Psoas muscle (tissue), 8 donors: ENCODE measurements at regions of chr3 and their contacts with region 1.

Region 1: GRCh38 chr3:127172781-127173515 is 20.0 kb upstream of the PRR23E start:
- DNase-seq: no peak
- ATAC-seq: no peak
- H3K4me3 ChIP-seq: no peak overlapping the region
- H3K27ac ChIP-seq: no peak overlapping the region
- H3K4me1 ChIP-seq: peaks cover 12% of the 10 kb centered on the region
- H3K27me3 ChIP-seq: no peaks in the 10 kb centered on the region
- CTCF ChIP-seq: no peak

Region 2: DNA sequence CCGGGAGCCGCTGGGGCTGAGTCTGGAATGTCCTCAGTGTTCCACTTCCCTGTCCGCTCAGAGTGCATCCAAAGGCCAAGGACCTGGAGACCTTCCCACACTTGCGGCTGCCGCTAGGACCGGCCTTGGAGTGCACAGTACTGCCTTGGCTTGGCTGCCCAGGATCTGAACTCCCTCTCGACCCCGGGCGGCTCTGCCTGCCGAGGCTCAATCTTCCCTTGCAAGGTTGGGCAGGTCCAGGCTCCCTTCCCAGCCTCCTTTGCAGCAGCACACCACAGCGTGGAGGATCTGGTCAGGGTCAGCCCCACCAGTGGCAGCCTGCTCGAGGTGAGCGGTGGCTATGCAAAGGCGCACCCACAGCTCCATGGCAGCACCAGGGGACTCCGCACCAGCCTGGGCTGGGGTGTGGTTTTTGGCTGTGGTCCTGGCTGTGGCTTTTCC is 120.8 kb before region 1 on chr3:
- intact Hi-C with region 1: loop called in 1 of 2 experiments (anchors 10 kb)
- DNase-seq: peak; percentile 86 to 92
- ATAC-seq: peak; percentile 84 to 92 (median 89)
- H3K4me3 ChIP-seq: no peak overlapping the region
- H3K27ac ChIP-seq: no peak overlapping the region
- H3K4me1 ChIP-seq: no peaks in the 10 kb centered on the region
- H3K27me3 ChIP-seq: no peaks in the 10 kb centered on the region
- CTCF ChIP-seq: no peak

Region 3: GRCh38 chr3:127135241-127136023 is 37.5 kb before region 1 on chr3:
- intact Hi-C with region 1: loop called in 1 of 2 experiments (anchors 5 kb)
- DNase-seq: peak; percentile 63 to 72
- ATAC-seq: peak; percentile 26 to 43 (median 32)
- H3K4me3 ChIP-seq: peak overlapping the region; percentile 59
- H3K27ac ChIP-seq: peak overlapping the region; percentile 64
- H3K4me1 ChIP-seq: peaks cover 30% of the 10 kb centered on the region
- H3K27me3 ChIP-seq: no peaks in the 10 kb centered on the region
- CTCF ChIP-seq: no peak